Heart left ventricle (tissue), 16 donors: ENCODE measurements at regions of chr4 and their contacts with region 1.

Region 1: GRCh38 chr4:10461091-10461849 is 4.0 kb upstream of the ZNF518B start:
- DNase-seq: peak; percentile 35 to 86 (median 45)
- ATAC-seq: peak; percentile 57 to 89 (median 86)
- H3K4me3 ChIP-seq: peak overlapping the region in 11 of 12 donors; percentile 1 to 47 (median 34)
- H3K27ac ChIP-seq: no peak overlapping the region
- H3K4me1 ChIP-seq: peaks cover 0 to 21% (median 5%) of the 10 kb centered on the region in 12 donors
- H3K27me3 ChIP-seq: peaks cover 6 to 55% (median 21%) of the 10 kb centered on the region in 9 donors
- CTCF ChIP-seq: peak; percentile 78 to 97 (median 94)
- POLR2A ChIP-seq: no peak

Region 2: GRCh38 chr4:10164877-10165283 is 296.4 kb before region 1 on chr4:
- intact Hi-C with region 1: loop called in 1 of 10 experiments (anchors 5 kb)
- DNase-seq: peak in 1 of 5 donors; percentile 33
- ATAC-seq: peak in 1 of 4 donors; percentile 36
- H3K4me3 ChIP-seq: no peak overlapping the region
- H3K27ac ChIP-seq: no peak overlapping the region
- H3K4me1 ChIP-seq: peaks cover 0 to 11% (median 0%) of the 10 kb centered on the region in 12 donors
- H3K27me3 ChIP-seq: no peaks in the 10 kb centered on the region
- CTCF ChIP-seq: peak; percentile 47 to 73 (median 64)
- POLR2A ChIP-seq: no peak

Region 3: DNA sequence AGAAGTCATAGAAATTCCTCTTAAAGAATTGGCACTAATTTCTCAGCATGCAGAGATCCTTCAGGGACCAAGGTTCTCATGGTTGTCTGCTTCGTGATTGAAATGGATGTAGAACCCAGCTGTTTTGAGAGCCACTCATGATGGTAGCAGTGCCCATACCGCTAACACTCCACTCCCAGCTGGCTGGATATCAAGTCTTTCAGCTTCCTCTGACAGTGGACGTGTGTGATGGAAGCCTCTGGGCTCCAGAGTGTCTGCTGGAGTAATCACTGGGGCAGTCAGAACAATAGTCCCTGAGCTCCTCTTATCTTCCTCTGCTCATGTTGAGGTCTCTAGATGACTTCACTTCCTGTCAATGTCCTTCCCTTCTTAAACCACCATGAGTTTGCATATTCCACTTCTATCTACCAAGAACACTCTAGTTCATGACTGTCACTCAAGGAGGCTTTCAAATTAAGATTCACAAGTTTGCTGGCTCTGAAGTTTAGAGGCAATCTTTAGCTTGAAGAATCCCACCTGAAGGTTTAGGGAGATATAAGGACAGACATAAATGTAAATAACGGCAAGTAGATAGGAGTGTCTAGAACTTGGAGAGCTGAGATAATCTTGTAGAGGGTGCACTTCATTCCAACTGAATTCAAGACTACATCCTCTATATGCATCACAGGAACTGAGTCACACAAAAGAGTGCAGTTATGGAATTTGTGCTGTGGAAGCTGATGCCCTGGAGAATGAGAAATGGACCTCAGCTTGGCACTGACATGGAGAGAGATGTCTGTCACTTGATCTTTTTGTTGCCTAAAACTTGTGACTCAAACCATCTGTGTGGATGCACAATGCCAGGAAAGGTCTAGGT is 280.1 kb before region 1 on chr4:
- intact Hi-C with region 1: no loop called
- DNase-seq: peak in 1 of 5 donors; percentile 32
- ATAC-seq: peak in 3 of 4 donors; percentile 31 to 72 (median 67)
- H3K4me3 ChIP-seq: no peak overlapping the region
- H3K27ac ChIP-seq: peak overlapping the region in 2 of 12 donors; percentile 21 to 32
- H3K4me1 ChIP-seq: peaks cover 0 to 28% (median 1%) of the 10 kb centered on the region in 12 donors
- H3K27me3 ChIP-seq: no peaks in the 10 kb centered on the region
- CTCF ChIP-seq: no peak
- POLR2A ChIP-seq: no peak

Region 4: GRCh38 chr4:10530137-10530786 is 69.0 kb after region 1 on chr4:
- intact Hi-C with region 1: loop called in 3 of 10 experiments (anchors 5 to 10 kb)
- DNase-seq: peak in 1 of 5 donors; percentile 30
- ATAC-seq: peak; percentile 80 to 87 (median 82)
- H3K4me3 ChIP-seq: no peak overlapping the region
- H3K27ac ChIP-seq: peak overlapping the region in 2 of 12 donors; percentile 46 to 47
- H3K4me1 ChIP-seq: peaks cover 0 to 23% (median 3%) of the 10 kb centered on the region in 12 donors
- H3K27me3 ChIP-seq: no peaks in the 10 kb centered on the region
- CTCF ChIP-seq: no peak
- POLR2A ChIP-seq: no peak

Region 5: GRCh38 chr4:10783351-10783750 is 322.1 kb after region 1 on chr4:
- intact Hi-C with region 1: no loop called
- DNase-seq: no peak
- ATAC-seq: no peak
- H3K4me3 ChIP-seq: no peak overlapping the region
- H3K27ac ChIP-seq: no peak overlapping the region
- H3K4me1 ChIP-seq: no peaks in the 10 kb centered on the region
- H3K27me3 ChIP-seq: no peaks in the 10 kb centered on the region
- CTCF ChIP-seq: no peak
- POLR2A ChIP-seq: no peak